Prostate gland (tissue), 2 donors: ENCODE measurements at regions of chr13 and their contacts with region 1.

Region 1: GRCh38 chr13:36919833-36920615 is at the start of gene SMAD9:
- DNase-seq: peak; percentile 76
- H3K4me3 ChIP-seq: peak within 1 kb of the TSS; percentile 59 to 67
- H3K27ac ChIP-seq: peak within 1 kb of the TSS; percentile 85 to 88
- H3K4me1 ChIP-seq: no peaks in the 10 kb centered on the region
- H3K27me3 ChIP-seq: no peaks in the 10 kb centered on the region
- CTCF ChIP-seq: no peak
- POLR2A ChIP-seq: no peak
- total RNA-seq, gene SMAD9: 25.1 to 30.7 TPM

Region 2: DNA sequence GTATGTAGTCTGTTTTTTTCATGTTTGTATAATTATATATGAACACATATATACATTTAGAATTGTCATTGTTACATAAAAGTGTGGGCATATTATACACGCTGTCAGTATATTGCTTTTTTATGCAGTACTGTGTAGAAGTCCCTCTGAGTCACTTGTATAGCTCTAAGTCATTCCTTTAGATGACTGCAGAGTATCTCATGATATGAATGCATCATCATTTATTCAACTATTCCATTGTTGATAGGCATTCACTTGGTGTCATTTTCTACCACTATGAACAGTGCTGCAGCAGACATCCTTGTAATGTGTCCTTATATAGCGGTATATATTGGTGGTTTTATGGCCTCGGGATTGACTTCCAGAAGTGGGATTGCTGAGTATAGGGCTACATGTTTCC is 85.7 kb before region 1 on chr13:
- intact Hi-C with region 1: no loop called
- DNase-seq: no peak
- H3K4me3 ChIP-seq: no peak overlapping the region
- H3K27ac ChIP-seq: no peak overlapping the region
- H3K4me1 ChIP-seq: no peaks in the 10 kb centered on the region
- H3K27me3 ChIP-seq: no peaks in the 10 kb centered on the region
- CTCF ChIP-seq: no peak
- POLR2A ChIP-seq: no peak

Region 3: GRCh38 chr13:36875431-36875830 is 44.6 kb before region 1 on chr13:
- intact Hi-C with region 1: loop called (anchors 5 kb)
- DNase-seq: no peak
- H3K4me3 ChIP-seq: no peak overlapping the region
- H3K27ac ChIP-seq: no peak overlapping the region
- H3K4me1 ChIP-seq: no peaks in the 10 kb centered on the region
- H3K27me3 ChIP-seq: no peaks in the 10 kb centered on the region
- CTCF ChIP-seq: no peak
- POLR2A ChIP-seq: no peak